CD8-positive, alpha-beta T cell (primary cell): ENCODE measurements at regions of chr18 and their contacts with region 1.

Region 1: DNA sequence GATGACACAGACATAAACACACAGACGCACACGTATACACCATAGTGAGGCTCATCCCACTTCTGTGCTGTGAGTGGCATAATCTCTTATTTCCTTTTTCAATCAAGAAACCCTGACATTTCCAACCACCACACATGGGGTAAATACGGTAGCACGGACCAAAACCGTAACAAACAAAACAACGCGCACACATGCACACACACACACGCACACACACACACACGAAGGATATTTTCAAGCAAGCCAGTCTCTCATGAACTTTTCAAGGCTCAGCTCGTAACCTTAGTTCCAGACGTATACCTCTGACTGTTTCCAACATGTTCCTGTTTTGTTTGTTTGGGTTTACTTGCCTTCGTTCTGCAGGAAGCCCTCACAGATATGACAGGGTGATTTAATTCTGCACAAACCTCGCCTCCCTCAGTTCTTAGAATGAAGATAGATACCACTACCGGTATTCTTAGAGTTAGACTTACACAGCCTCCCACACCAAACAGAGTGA is 119.8 kb downstream of the BCL2 start:
- DNase-seq: peak in 6 of 9 experiments; percentile 35 to 70 (median 56)
- ATAC-seq: peak; percentile 67
- H3K4me3 ChIP-seq: peak overlapping the region; percentile 54 to 70
- H3K4me3 Mint-ChIP-seq: no peak overlapping the region
- H3K27ac ChIP-seq: peak overlapping the region; percentile 60 to 72
- H3K27ac Mint-ChIP-seq: no peak overlapping the region
- H3K4me1 ChIP-seq: peaks cover 68% of the 10 kb centered on the region
- H3K4me1 Mint-ChIP-seq: peaks cover 39% of the 10 kb centered on the region
- H3K27me3 ChIP-seq: no peaks in the 10 kb centered on the region
- H3K27me3 Mint-ChIP-seq: no peaks in the 10 kb centered on the region
- CTCF ChIP-seq: no peak

Region 2: GRCh38 chr18:62790871-62791772 is 408.7 kb before region 1 on chr18:
- CTCF ChIA-PET with region 1: no interaction called
- POLR2A ChIA-PET with region 1: no interaction called
- intact Hi-C with region 1: no loop called
- DNase-seq: peak in 1 of 9 experiments; percentile 12
- ATAC-seq: no peak
- H3K4me3 ChIP-seq: no peak overlapping the region
- H3K4me3 Mint-ChIP-seq: no peak overlapping the region
- H3K27ac ChIP-seq: no peak overlapping the region
- H3K27ac Mint-ChIP-seq: no peak overlapping the region
- H3K4me1 ChIP-seq: peaks cover 10% of the 10 kb centered on the region
- H3K4me1 Mint-ChIP-seq: peaks cover 38% of the 10 kb centered on the region
- H3K27me3 ChIP-seq: no peaks in the 10 kb centered on the region
- H3K27me3 Mint-ChIP-seq: peaks cover 2% of the 10 kb centered on the region
- CTCF ChIP-seq: no peak

Region 3: GRCh38 chr18:63161761-63162195 is 38.0 kb before region 1 on chr18:
- CTCF ChIA-PET with region 1: interaction called, 5 read pairs
- POLR2A ChIA-PET with region 1: interaction called, 8 read pairs
- intact Hi-C with region 1: loop called (anchors 2 kb)
- DNase-seq: peak; percentile 51 to 94 (median 78)
- ATAC-seq: peak; percentile 85
- H3K4me3 ChIP-seq: peak overlapping the region; percentile 17 to 30
- H3K4me3 Mint-ChIP-seq: peak overlapping the region; percentile 65
- H3K27ac ChIP-seq: peak overlapping the region; percentile 81 to 99
- H3K27ac Mint-ChIP-seq: peak overlapping the region; percentile 98
- H3K4me1 ChIP-seq: peaks cover 77% of the 10 kb centered on the region
- H3K4me1 Mint-ChIP-seq: peaks cover 91% of the 10 kb centered on the region
- H3K27me3 ChIP-seq: no peaks in the 10 kb centered on the region
- H3K27me3 Mint-ChIP-seq: no peaks in the 10 kb centered on the region
- CTCF ChIP-seq: no peak

Region 4: DNA sequence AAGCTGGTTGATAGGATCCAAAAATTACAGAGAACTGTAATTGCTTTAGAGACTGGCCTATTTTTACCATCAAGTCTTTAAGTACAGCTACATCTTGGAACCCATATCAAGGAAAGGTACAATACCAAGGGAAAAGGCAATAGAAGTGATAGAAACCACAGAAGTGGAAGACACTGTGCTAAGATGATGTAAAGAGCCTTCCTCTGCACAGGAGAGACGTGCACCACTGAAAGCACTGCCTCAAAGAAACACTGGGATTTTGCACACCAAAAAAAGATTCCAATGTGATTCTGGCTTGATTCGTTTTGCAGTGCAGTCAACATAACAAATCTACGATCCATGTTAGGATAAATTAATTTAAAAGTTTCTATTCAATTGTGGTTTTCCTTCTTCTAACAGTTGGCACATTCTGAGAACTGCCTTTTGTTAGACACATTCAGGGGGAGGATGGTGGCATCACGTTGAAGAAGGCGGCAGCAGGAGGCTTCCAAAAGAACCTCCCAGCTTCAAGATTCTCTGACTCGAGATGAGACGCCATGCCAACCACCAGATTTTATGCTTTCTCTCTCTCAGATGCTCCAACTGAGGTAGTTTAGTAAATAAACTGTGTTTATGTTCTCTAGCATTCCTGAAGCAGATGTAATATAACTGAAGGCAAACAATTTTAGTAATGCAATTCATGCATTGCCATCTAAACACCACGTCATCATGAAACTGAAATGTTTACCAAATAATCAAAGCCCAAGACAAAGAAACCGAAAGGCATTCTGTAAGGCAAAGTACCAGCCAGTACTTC is 16.9 kb after region 1 on chr18:
- CTCF ChIA-PET with region 1: interaction called, 5 read pairs
- POLR2A ChIA-PET with region 1: interaction called, 4 read pairs
- intact Hi-C with region 1: loop called (anchors 1 to 2 kb)
- DNase-seq: peak in 4 of 9 experiments; percentile 35 to 60 (median 44)
- ATAC-seq: peak; percentile 69
- H3K4me3 ChIP-seq: peak overlapping the region; percentile 3 to 12
- H3K4me3 Mint-ChIP-seq: peak overlapping the region; percentile 77
- H3K27ac ChIP-seq: peak overlapping the region; percentile 43 to 66
- H3K27ac Mint-ChIP-seq: peak overlapping the region; percentile 95
- H3K4me1 ChIP-seq: peaks cover 86% of the 10 kb centered on the region
- H3K4me1 Mint-ChIP-seq: peaks cover 93% of the 10 kb centered on the region
- H3K27me3 ChIP-seq: no peaks in the 10 kb centered on the region
- H3K27me3 Mint-ChIP-seq: no peaks in the 10 kb centered on the region
- CTCF ChIP-seq: no peak

Region 5: DNA sequence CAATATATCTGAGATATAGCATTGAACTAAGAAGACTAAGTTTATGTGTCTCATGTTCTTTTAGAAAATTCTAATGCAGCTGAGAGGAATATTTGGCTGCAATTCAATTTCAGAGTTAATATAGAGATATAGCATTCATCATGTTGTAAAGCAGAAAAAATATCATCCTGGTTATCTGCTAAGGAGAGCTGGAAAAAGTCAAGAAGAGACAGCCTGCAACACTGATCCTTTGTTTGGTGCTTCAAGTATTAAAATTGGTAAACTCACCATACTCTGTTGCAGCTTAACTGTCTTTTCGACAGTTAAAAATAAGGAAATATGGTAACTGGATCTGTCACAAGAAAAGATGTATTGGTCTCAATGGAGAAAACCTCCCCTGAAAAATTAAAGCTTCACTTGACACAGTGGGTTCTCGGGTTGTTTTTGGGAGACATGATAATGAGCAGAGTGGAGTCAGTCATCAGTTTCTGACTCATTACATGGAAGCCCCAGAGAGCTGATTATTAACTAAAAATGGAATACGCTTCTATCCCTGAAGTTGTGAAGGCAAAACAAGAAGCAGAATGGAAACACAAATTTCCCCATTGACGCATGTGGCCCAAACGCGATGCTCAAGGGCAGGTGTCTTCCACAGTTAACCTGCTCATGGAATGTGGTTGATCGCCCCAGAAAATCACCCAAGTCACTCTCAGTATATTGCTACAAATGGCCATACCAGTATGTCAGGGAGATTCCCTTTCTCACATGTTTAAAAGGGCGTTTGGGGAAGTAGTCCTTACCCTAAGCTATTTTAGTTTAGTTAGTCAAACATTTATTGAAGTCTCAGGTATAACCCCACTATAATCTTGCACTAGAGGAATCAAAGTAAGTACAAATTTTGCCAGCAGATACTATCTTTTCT is 111.6 kb after region 1 on chr18:
- CTCF ChIA-PET with region 1: interaction called, 4 read pairs
- POLR2A ChIA-PET with region 1: interaction called, 3 read pairs
- intact Hi-C with region 1: loop called in 1 of 2 experiments (anchors 2 kb)
- DNase-seq: no peak
- ATAC-seq: no peak
- H3K4me3 ChIP-seq: no peak overlapping the region
- H3K4me3 Mint-ChIP-seq: no peak overlapping the region
- H3K27ac ChIP-seq: no peak overlapping the region
- H3K27ac Mint-ChIP-seq: peak overlapping the region; percentile 90
- H3K4me1 ChIP-seq: peaks cover 84% of the 10 kb centered on the region
- H3K4me1 Mint-ChIP-seq: peaks cover 87% of the 10 kb centered on the region
- H3K27me3 ChIP-seq: no peaks in the 10 kb centered on the region
- H3K27me3 Mint-ChIP-seq: no peaks in the 10 kb centered on the region
- CTCF ChIP-seq: no peak